Breast epithelium (tissue), 4 donors: ENCODE measurements at regions of chr7 and their contacts with region 1.

Region 1: GRCh38 chr7:52209614-52210013 is 825.8 kb upstream of the POM121L12 start:
- DNase-seq: no peak
- H3K4me3 ChIP-seq: no peak overlapping the region
- H3K27ac ChIP-seq: no peak overlapping the region
- H3K4me1 ChIP-seq: no peaks in the 10 kb centered on the region
- H3K27me3 ChIP-seq: no peaks in the 10 kb centered on the region
- CTCF ChIP-seq: no peak
- POLR2A ChIP-seq: no peak

Region 2: GRCh38 chr7:52936750-52937149 is 727.1 kb after region 1 on chr7:
- intact Hi-C with region 1: loop called (anchors 5 kb)
- DNase-seq: no peak
- H3K4me3 ChIP-seq: no peak overlapping the region
- H3K27ac ChIP-seq: no peak overlapping the region
- H3K4me1 ChIP-seq: no peaks in the 10 kb centered on the region
- H3K27me3 ChIP-seq: no peaks in the 10 kb centered on the region
- CTCF ChIP-seq: no peak
- POLR2A ChIP-seq: no peak